ENCODE measurements at regions of chr12 and their contacts with region 1.

Region 1: DNA sequence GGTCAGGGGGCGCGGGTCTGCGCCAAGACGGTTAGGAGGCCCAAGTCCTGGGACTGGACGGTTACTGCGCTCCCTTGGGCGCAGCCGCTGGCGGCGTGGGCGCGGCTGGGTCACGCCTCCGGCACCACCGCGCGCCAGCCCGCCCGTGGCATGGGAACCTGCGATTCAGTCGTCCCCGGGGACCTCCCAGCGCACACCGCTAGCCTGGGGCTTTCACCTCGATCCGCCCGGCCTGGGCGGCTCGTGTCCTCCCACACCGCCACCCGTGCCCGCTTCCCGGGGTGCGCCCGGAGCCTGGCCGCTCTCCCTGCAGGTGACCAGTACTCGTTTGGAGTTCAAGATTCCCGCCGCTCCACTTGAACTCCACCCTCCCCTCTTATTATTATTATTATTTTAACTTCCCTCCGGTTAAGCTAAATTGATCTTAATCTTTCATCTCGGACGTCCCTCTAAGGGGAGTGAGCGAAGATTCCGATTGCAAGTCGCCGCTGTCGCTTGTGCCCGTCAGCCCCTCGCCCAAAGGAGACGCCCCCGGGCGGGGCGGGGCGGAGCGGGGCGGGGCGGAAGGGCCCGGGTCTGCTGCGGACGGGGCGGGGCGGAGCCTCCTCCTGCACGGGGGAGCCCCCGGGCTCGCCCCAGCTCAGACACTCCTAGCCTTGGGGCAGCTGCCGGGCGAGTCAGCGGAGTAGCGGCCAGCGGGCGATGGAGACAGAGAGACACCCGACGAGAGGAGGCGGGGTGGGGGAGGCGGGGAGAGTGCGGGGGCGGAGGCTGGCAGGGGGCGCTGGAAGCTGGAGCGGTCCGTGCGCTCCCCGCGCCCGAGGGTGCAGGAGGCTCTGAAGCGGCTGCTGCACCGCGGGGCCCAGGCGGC is at the start of gene KCNMB4:
- DNase-seq: peak; percentile 61 to 81 (median 73)
- ATAC-seq: peak; percentile 88
- H3K4me3 ChIP-seq: peak within 1 kb of the TSS; percentile 33
- H3K4me1 ChIP-seq: peaks cover 14% of the 10 kb centered on the region
- CTCF ChIP-seq: no peak
- total RNA-seq, gene KCNMB4: 0.52 to 7.4 (median 1.0) TPM

Region 2: DNA sequence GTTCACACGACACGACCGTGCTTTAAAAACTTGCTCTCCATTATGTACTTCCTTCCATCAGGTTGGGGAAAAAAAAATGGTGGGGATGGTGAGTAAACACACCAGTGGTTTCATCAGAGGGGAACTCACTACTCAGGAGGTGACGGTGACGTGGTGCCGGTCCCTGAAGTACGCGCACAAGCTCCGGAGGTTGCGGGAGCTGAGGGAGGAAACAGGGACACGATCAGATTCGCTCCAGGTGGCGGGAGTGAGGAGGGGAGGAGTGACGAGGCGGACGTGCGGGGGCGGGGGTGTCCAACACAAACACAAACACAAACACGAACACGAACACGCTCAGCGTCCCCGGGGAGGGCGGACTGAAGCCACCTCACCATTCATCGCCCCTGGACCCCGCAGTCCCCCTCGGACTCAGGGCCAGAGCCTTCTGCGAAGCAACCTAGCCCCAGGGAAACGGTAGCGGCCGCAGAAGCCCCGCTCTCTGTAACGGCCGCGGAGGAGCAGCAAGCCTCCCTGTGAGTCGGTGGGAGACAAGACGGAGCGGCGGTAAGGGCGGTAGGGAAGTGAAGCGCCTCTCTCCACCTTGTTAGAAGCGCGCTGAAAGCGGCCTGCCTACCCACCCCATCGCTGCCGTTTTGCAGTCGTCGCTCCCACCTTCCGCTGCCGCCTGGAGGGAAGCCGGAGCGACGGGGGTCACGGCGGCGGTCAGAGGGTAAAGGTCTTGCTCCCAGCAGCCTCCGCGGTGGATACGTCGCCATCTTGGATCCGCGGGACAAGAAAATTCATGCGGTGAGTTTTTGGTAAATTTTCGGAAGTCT is 123.0 kb before region 1 on chr12 and contains the start of gene CNOT2:
- intact Hi-C with region 1: loop called in 1 of 2 experiments (anchors 10 kb)
- DNase-seq: peak; percentile 93 to 95 (median 94)
- ATAC-seq: peak; percentile 94
- H3K4me3 ChIP-seq: peak within 1 kb of the TSS; percentile 76
- H3K4me1 ChIP-seq: peaks cover 42% of the 10 kb centered on the region
- CTCF ChIP-seq: no peak
- total RNA-seq, gene CNOT2: 80.3 to 86.2 (median 81.0) TPM

Region 3: GRCh38 chr12:70277973-70278372 is 87.9 kb before region 1 on chr12:
- intact Hi-C with region 1: no loop called
- DNase-seq: no peak
- ATAC-seq: no peak
- H3K4me3 ChIP-seq: no peak overlapping the region
- H3K4me1 ChIP-seq: no peaks in the 10 kb centered on the region
- CTCF ChIP-seq: no peak